A549 (cell line): ENCODE measurements at regions of chr1 and their contacts with region 1.

Region 1: DNA sequence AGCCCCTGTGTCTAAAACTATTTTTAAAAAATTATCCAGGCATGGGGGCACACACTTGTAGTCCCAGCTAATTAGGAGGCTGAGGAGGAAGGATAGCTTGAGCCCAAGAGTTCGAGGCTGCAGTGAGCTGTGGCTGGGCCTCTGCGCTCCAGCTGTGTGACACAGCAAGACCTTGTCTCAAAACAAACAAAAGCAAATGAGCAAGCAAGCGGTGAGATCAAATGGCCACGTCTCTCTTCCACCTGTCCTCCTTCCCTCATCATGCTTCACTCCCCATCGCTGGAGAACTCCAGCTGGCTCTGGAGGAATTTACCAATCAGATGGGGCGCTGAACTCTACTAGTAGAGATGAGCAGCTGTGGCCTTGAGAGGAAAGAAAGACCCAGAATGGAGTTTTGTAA is 14.0 kb upstream of the REN start:
- DNase-seq: no peak
- ATAC-seq: no peak
- H3K4me3 ChIP-seq: no peak overlapping the region
- H3K27ac ChIP-seq: no peak overlapping the region
- H3K4me1 ChIP-seq: no peaks in the 10 kb centered on the region
- CTCF ChIP-seq: no peak
- EP300 ChIP-seq: no peak
- POLR2A ChIP-seq: no peak
- RAD21 ChIP-seq: no peak

Region 2: GRCh38 chr1:204198151-204198994 is 18.2 kb after region 1 on chr1:
- CTCF ChIA-PET with region 1: interaction called, 314 read pairs
- POLR2A ChIA-PET with region 1: no interaction called
- DNase-seq: peak; percentile 44 to 49
- ATAC-seq: peak; percentile 57 to 59
- H3K4me3 ChIP-seq: no peak overlapping the region
- H3K27ac ChIP-seq: 0 out of 6 replicates have a peak overlapping the region, but pooled peaks of 1 of the 2 experiments have one; percentile 18
- H3K4me1 ChIP-seq: peaks cover 5% of the 10 kb centered on the region; the same call in 2 of the 3 replicates
- CTCF ChIP-seq: peak; percentile 12; the same call in 1 of the 3 replicates
- EP300 ChIP-seq: no peak
- POLR2A ChIP-seq: no peak
- RAD21 ChIP-seq: peak; percentile 16 to 34; a peak in 3 of 5 replicates